B cell (primary cell): ENCODE measurements at regions of chr14 and their contacts with region 1.

Region 1: DNA sequence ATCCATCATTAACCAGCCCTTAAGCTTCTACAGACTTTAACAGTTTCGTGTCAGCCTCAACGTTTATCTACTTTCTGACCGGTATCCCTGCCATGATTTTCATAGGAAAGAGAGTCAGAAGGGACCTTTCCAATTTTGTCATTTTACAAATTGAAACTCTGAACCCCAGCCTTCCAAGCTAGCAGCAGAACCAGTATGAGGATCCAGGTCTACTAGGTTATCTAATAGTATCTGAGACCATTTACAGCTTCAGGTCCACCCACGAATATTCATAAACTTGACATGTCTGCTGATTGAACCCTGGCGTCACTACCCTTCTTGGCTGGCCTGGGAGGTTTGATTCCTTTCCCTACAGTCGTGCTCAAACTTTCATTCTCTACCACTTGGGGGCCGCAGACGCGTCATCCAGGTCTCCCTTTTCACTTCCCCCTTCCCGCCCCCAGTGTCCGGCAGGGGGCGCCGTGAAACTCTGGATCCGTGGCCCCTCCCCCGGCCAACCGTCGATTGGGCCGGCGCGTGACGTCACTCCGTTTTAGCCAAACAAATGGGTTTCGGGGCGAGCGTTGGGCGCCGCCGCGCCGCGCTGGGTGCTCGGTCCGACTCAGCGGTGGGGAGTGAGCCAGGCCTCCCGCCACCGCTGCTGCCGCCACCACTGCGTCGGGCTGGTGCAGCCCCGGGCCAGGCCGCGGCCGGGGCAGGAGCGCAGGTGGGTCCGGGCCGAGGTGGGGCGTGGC is at the start of gene FBXO34:
- DNase-seq: peak; percentile 99
- ATAC-seq: peak; percentile 90
- H3K4me3 ChIP-seq: peak within 1 kb of the TSS; percentile 83 to 98 (median 95)
- H3K4me3 Mint-ChIP-seq: peak within 1 kb of the TSS; percentile 92
- H3K27ac ChIP-seq: peak within 1 kb of the TSS; percentile 86 to 90
- H3K27ac Mint-ChIP-seq: peak within 1 kb of the TSS; percentile 93
- H3K4me1 ChIP-seq: peaks cover 12 to 14% of the 10 kb centered on the region in 2 donors
- H3K4me1 Mint-ChIP-seq: peaks cover 31% of the 10 kb centered on the region
- H3K27me3 ChIP-seq: no peaks in the 10 kb centered on the region
- H3K27me3 Mint-ChIP-seq: no peaks in the 10 kb centered on the region
- CTCF ChIP-seq: peak; percentile 99
- total RNA-seq, gene FBXO34: 27.5 and 33.4 TPM in 2 replicates

Region 2: GRCh38 chr14:54440873-54441868 is 829.8 kb before region 1 on chr14 and contains the start of gene CNIH1:
- CTCF ChIA-PET with region 1: no interaction called
- POLR2A ChIA-PET with region 1: no interaction called
- intact Hi-C with region 1: loop called (anchors 5 kb)
- DNase-seq: peak; percentile 96
- ATAC-seq: peak; percentile 93
- H3K4me3 ChIP-seq: peak within 1 kb of the TSS; percentile 51 to 73 (median 62)
- H3K4me3 Mint-ChIP-seq: peak within 1 kb of the TSS; percentile 90
- H3K27ac ChIP-seq: peak within 1 kb of the TSS; percentile 74 to 82
- H3K27ac Mint-ChIP-seq: peak within 1 kb of the TSS; percentile 90
- H3K4me1 ChIP-seq: peaks cover 26 to 27% of the 10 kb centered on the region in 2 donors
- H3K4me1 Mint-ChIP-seq: peaks cover 46% of the 10 kb centered on the region
- H3K27me3 ChIP-seq: peaks cover 0 to under 1% (median 0%) of the 10 kb centered on the region in 4 experiments
- H3K27me3 Mint-ChIP-seq: peaks cover 3% of the 10 kb centered on the region
- CTCF ChIP-seq: peak; percentile 96
- total RNA-seq, gene CNIH1: 42.8 and 52.0 TPM in 2 replicates

Region 3: DNA sequence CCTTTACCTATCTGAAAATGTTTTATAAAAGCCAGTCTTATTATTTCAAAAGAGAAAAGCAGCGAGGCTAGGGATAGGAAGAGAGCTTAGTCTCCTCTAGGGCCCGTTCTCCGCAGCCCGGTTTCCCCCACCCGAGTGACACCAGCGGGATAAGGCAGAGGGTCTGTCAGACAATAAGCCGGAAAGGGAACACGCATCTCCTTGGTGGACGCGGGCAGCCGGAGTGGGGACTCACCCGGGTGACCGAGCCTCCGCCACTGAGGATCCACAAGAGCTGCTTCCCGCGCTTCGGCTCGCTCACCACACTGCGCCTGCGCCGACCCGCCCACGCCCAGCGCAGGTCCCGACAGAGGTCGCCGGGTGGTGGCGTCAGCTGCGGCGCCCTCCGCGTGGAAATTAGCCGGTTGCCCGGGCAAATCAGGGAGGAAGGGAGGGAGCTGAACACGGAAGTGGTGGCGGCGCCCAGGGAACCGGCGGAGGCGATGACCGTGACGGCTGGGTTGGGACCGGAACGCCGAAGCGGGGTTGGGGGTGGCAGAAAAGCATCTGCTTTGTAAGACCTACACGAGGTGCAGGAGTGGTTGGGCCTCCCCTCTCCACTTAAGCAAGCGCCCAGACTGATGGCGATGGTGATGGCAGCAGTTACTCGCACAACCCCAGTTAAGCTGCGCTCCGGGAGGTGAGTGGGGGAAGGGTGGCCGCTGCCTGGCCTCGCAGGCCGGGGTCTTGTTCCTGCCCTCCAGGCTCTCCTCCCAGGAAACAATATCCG is 244.0 kb before region 1 on chr14 and contains the starts of genes SOCS4 and WDHD1:
- CTCF ChIA-PET with region 1: no interaction called
- POLR2A ChIA-PET with region 1: no interaction called
- intact Hi-C with region 1: loop called (anchors 1 kb)
- DNase-seq: peak; percentile 97
- ATAC-seq: peak; percentile 93
- H3K4me3 ChIP-seq: peak within 1 kb of the TSS; percentile 62 to 95 (median 90)
- H3K4me3 Mint-ChIP-seq: peak within 1 kb of the TSS; percentile 94
- H3K27ac ChIP-seq: peak within 1 kb of the TSS; percentile 78 to 90
- H3K27ac Mint-ChIP-seq: peak within 1 kb of the TSS; percentile 91
- H3K4me1 ChIP-seq: peaks cover 18 to 30% of the 10 kb centered on the region in 2 donors
- H3K4me1 Mint-ChIP-seq: peaks cover 47% of the 10 kb centered on the region
- H3K27me3 ChIP-seq: no peaks in the 10 kb centered on the region
- H3K27me3 Mint-ChIP-seq: no peaks in the 10 kb centered on the region
- CTCF ChIP-seq: no peak
- total RNA-seq, gene SOCS4: 23.6 and 26.3 TPM in 2 replicates
- total RNA-seq, gene WDHD1: 6.2 and 6.5 TPM in 2 replicates

Region 4: GRCh38 chr14:55071870-55072640 is 198.9 kb before region 1 on chr14:
- CTCF ChIA-PET with region 1: no interaction called
- POLR2A ChIA-PET with region 1: no interaction called
- intact Hi-C with region 1: loop called (anchors 1 kb)
- DNase-seq: peak; percentile 86
- ATAC-seq: peak; percentile 75
- H3K4me3 ChIP-seq: peak overlapping the region in 4 of 5 experiments; percentile 4 to 48 (median 31)
- H3K4me3 Mint-ChIP-seq: peak overlapping the region; percentile 81
- H3K27ac ChIP-seq: peak overlapping the region; percentile 84 to 93
- H3K27ac Mint-ChIP-seq: peak overlapping the region; percentile 96
- H3K4me1 ChIP-seq: peaks cover 34 to 52% of the 10 kb centered on the region in 2 donors
- H3K4me1 Mint-ChIP-seq: peaks cover 66% of the 10 kb centered on the region
- H3K27me3 ChIP-seq: no peaks in the 10 kb centered on the region
- H3K27me3 Mint-ChIP-seq: no peaks in the 10 kb centered on the region
- CTCF ChIP-seq: no peak

Region 5: GRCh38 chr14:55288439-55288838 is 17.4 kb after region 1 on chr14:
- CTCF ChIA-PET with region 1: no interaction called
- POLR2A ChIA-PET with region 1: no interaction called
- intact Hi-C with region 1: no loop called
- DNase-seq: no peak
- ATAC-seq: no peak
- H3K4me3 ChIP-seq: no peak overlapping the region
- H3K4me3 Mint-ChIP-seq: no peak overlapping the region
- H3K27ac ChIP-seq: no peak overlapping the region
- H3K27ac Mint-ChIP-seq: no peak overlapping the region
- H3K4me1 ChIP-seq: no peaks in the 10 kb centered on the region
- H3K4me1 Mint-ChIP-seq: peaks cover 23% of the 10 kb centered on the region
- H3K27me3 ChIP-seq: no peaks in the 10 kb centered on the region
- H3K27me3 Mint-ChIP-seq: no peaks in the 10 kb centered on the region
- CTCF ChIP-seq: no peak

Region 6: GRCh38 chr14:55354500-55354899 is 83.5 kb after region 1 on chr14:
- CTCF ChIA-PET with region 1: interaction called, 51 read pairs
- POLR2A ChIA-PET with region 1: no interaction called
- intact Hi-C with region 1: loop called (anchors 1 kb)
- DNase-seq: peak; percentile 64
- ATAC-seq: peak; percentile 82
- H3K4me3 ChIP-seq: no peak overlapping the region
- H3K4me3 Mint-ChIP-seq: no peak overlapping the region
- H3K27ac ChIP-seq: no peak overlapping the region
- H3K27ac Mint-ChIP-seq: no peak overlapping the region
- H3K4me1 ChIP-seq: peaks cover 0 to 3% of the 10 kb centered on the region in 2 donors
- H3K4me1 Mint-ChIP-seq: peaks cover 9% of the 10 kb centered on the region
- H3K27me3 ChIP-seq: no peaks in the 10 kb centered on the region
- H3K27me3 Mint-ChIP-seq: no peaks in the 10 kb centered on the region
- CTCF ChIP-seq: peak; percentile 71

Region 7: DNA sequence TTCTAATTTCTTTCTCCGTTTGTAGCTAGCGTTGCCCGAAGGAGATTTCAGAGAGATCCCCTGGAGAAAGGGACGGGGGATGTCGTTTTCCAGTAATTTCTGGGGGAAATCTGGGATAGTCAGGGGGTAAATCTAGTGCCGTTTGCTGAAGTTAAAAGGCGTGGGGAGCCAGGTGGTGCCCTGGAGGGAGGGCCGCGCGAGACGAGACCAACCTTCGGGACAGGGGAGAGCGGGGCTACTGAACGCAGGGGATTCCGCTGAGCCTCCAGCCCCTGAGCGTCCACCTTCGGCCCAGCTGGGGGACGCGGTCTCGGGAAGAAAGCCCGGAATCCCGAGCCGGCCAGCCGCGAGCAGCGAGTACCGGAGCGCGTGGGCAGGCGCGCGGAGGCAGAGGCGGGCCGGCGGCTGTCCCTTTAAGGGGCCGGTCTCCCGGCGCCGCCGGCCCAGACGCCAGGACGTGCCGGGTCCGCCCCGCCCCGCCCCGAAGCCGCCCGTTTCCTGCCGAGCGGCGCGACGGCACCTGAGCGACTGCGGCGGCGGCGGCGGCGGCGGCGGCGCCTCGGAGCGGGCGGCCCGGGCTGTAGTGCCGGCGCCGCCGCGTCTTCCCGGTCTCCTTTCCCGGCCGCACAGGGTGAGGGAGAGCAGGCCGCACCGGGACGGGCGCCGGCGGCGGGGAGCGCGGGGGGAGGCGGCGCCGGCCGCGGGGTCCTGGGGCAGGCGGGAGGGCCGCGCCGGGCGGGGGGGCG is 308.9 kb after region 1 on chr14 and contains the start of gene KTN1:
- CTCF ChIA-PET with region 1: no interaction called
- POLR2A ChIA-PET with region 1: no interaction called
- intact Hi-C with region 1: loop called (anchors 1 kb)
- DNase-seq: peak; percentile 91
- ATAC-seq: peak; percentile 90
- H3K4me3 ChIP-seq: peak within 1 kb of the TSS; percentile 72 to 96 (median 85)
- H3K4me3 Mint-ChIP-seq: peak within 1 kb of the TSS; percentile 96
- H3K27ac ChIP-seq: peak within 1 kb of the TSS; percentile 59 to 91
- H3K27ac Mint-ChIP-seq: peak within 1 kb of the TSS; percentile 96
- H3K4me1 ChIP-seq: peaks cover 37 to 39% of the 10 kb centered on the region in 2 donors
- H3K4me1 Mint-ChIP-seq: peaks cover 29% of the 10 kb centered on the region
- H3K27me3 ChIP-seq: no peaks in the 10 kb centered on the region
- H3K27me3 Mint-ChIP-seq: no peaks in the 10 kb centered on the region
- CTCF ChIP-seq: no peak
- total RNA-seq, gene KTN1: 120 and 123 TPM in 2 replicates

Region 8: GRCh38 chr14:56579345-56580220 is 1308.6 kb after region 1 on chr14 and contains the start of gene TMEM260:
- CTCF ChIA-PET with region 1: no interaction called
- POLR2A ChIA-PET with region 1: no interaction called
- intact Hi-C with region 1: loop called (anchors 5 kb)
- DNase-seq: peak; percentile 97
- ATAC-seq: peak; percentile 94
- H3K4me3 ChIP-seq: peak within 1 kb of the TSS; percentile 75 to 97 (median 90)
- H3K4me3 Mint-ChIP-seq: peak within 1 kb of the TSS; percentile 96
- H3K27ac ChIP-seq: peak within 1 kb of the TSS; percentile 78 to 91
- H3K27ac Mint-ChIP-seq: peak within 1 kb of the TSS; percentile 98
- H3K4me1 ChIP-seq: peaks cover 23 to 24% of the 10 kb centered on the region in 2 donors
- H3K4me1 Mint-ChIP-seq: peaks cover 38% of the 10 kb centered on the region
- H3K27me3 ChIP-seq: peaks cover 0 to 4% (median 0%) of the 10 kb centered on the region in 4 experiments
- H3K27me3 Mint-ChIP-seq: peaks cover 3% of the 10 kb centered on the region
- CTCF ChIP-seq: peak; percentile 97
- total RNA-seq, gene TMEM260: 33.9 and 39.3 TPM in 2 replicates